ENCODE measurements at regions of chr17 and their contacts with region 1.

Region 1: DNA sequence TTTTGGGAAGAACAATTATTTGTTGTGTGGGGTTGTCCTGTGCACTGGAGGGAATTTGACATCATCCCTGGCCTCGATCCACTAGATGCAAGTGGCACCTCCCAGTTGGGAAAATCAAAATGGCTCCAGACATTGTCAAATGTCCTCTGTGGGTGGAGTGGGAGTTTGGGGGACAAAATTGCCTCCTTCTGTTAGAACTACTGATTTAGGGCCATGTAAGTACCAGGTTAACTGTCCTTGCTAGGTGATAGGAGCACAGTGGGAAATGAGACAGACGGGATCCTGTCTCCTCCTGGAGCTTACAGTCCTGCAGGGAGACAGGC is 56.8 kb downstream of the ARHGAP23 start:
- DNase-seq: no peak
- H3K4me3 Mint-ChIP-seq: peak overlapping the region; percentile 36
- H3K27ac Mint-ChIP-seq: peak overlapping the region; percentile 63
- H3K4me1 Mint-ChIP-seq: peaks cover 11% of the 10 kb centered on the region
- H3K27me3 Mint-ChIP-seq: peaks cover 1% of the 10 kb centered on the region

Region 2: GRCh38 chr17:38421171-38421841 is 63.8 kb before region 1 on chr17:
- CTCF ChIA-PET with region 1: interaction called, 18 read pairs
- POLR2A ChIA-PET with region 1: no interaction called
- intact Hi-C with region 1: loop called (anchors 2 kb)
- DNase-seq: no peak
- H3K4me3 Mint-ChIP-seq: no peak overlapping the region
- H3K27ac Mint-ChIP-seq: no peak overlapping the region
- H3K4me1 Mint-ChIP-seq: peaks cover 6% of the 10 kb centered on the region
- H3K27me3 Mint-ChIP-seq: peaks cover 58% of the 10 kb centered on the region

Region 3: DNA sequence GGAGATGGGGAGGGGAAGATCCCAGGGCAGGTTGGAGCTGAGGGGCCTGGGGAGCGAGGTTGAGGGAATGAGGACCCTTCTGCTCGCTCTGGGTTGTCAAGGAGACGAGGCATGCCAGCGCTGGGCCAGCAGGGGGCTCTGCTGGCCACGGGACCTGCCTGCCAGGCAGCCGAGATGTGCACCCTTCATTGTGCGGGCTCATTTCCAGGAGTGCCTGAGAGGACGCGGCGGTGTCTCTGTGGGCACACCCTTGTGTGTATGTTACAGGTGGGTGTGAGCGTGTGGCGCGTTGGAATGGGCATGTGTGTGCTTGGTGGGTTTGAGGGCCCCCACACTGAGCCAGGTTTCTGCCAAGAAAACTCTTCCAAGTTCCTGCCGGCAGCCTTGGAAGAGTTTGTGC is 41.0 kb before region 1 on chr17:
- CTCF ChIA-PET with region 1: interaction called, 4 read pairs
- POLR2A ChIA-PET with region 1: no interaction called
- intact Hi-C with region 1: loop called (anchors 1 kb)
- DNase-seq: peak; percentile 69
- H3K4me3 Mint-ChIP-seq: no peak overlapping the region
- H3K27ac Mint-ChIP-seq: no peak overlapping the region
- H3K4me1 Mint-ChIP-seq: peaks cover 5% of the 10 kb centered on the region
- H3K27me3 Mint-ChIP-seq: peaks cover 10% of the 10 kb centered on the region

Region 4: DNA sequence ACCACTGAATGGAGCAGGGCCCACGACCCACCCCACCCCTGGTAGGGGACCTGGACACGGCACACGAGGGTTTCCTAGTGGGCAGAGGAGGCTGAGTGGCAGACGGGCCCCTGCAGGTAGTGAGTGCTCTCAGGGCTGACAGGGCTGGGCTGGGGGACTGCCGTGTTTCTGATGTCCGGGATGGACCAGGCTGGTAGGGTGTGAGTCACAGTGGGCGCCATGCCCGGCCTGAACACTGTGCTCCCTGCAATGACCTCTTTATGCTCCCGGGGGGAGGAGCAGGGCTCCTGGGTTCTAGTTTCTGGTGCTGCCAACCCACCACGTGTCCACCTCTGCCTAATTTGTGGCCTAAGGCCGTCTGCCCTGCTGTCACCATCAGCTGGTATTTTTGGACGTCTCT is 30.6 kb before region 1 on chr17:
- CTCF ChIA-PET with region 1: no interaction called
- POLR2A ChIA-PET with region 1: no interaction called
- intact Hi-C with region 1: no loop called
- DNase-seq: no peak
- H3K4me3 Mint-ChIP-seq: no peak overlapping the region
- H3K27ac Mint-ChIP-seq: no peak overlapping the region
- H3K4me1 Mint-ChIP-seq: peaks cover 11% of the 10 kb centered on the region
- H3K27me3 Mint-ChIP-seq: peaks cover 31% of the 10 kb centered on the region

Region 5: GRCh38 chr17:38469875-38470274 is 15.2 kb before region 1 on chr17:
- CTCF ChIA-PET with region 1: no interaction called
- POLR2A ChIA-PET with region 1: no interaction called
- intact Hi-C with region 1: no loop called
- DNase-seq: no peak
- H3K4me3 Mint-ChIP-seq: no peak overlapping the region
- H3K27ac Mint-ChIP-seq: no peak overlapping the region
- H3K4me1 Mint-ChIP-seq: no peaks in the 10 kb centered on the region
- H3K27me3 Mint-ChIP-seq: peaks cover 2% of the 10 kb centered on the region

Region 6: GRCh38 chr17:38550661-38551060 is 65.6 kb after region 1 on chr17:
- CTCF ChIA-PET with region 1: no interaction called
- POLR2A ChIA-PET with region 1: no interaction called
- intact Hi-C with region 1: no loop called
- DNase-seq: no peak
- H3K4me3 Mint-ChIP-seq: no peak overlapping the region
- H3K27ac Mint-ChIP-seq: no peak overlapping the region
- H3K4me1 Mint-ChIP-seq: no peaks in the 10 kb centered on the region
- H3K27me3 Mint-ChIP-seq: peaks cover 12% of the 10 kb centered on the region

Region 7: DNA sequence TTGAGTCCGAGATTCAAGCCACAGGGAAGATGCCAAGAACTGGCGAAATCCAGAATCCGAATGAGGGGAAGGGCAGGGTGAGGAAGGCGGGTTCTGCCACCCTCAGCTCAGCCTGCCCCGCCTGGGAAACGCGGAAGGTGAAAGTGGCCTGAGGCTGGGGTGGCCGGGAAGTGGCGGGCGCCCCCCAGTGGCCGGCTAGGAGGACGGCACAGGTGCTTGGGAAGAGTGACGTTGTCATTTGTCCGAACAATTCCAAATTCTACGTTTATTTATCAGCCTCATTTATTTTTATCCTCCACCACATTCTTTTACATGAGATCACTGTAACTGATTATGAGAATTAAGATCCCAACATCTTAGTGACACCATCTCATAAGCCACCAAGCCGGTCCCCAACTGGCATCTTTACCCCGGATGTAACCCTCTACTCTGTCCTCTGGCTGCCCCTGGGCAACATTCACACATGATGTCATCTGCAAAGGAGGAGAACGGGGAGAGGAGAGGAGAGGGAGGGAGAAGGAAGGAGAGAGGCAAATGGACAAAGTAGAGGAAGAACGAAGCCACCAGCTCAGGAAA is 99.3 kb after region 1 on chr17:
- CTCF ChIA-PET with region 1: no interaction called
- POLR2A ChIA-PET with region 1: no interaction called
- intact Hi-C with region 1: loop called (anchors 5 kb)
- DNase-seq: peak; percentile 73
- H3K4me3 Mint-ChIP-seq: no peak overlapping the region
- H3K27ac Mint-ChIP-seq: no peak overlapping the region
- H3K4me1 Mint-ChIP-seq: peaks cover 4% of the 10 kb centered on the region
- H3K27me3 Mint-ChIP-seq: peaks cover 69% of the 10 kb centered on the region